Activated B cell treated with CpG ODN at 0.5 μM for 24 hours (primary cell): ENCODE measurements at regions of chr12 and their contacts with region 1.

Region 1: DNA sequence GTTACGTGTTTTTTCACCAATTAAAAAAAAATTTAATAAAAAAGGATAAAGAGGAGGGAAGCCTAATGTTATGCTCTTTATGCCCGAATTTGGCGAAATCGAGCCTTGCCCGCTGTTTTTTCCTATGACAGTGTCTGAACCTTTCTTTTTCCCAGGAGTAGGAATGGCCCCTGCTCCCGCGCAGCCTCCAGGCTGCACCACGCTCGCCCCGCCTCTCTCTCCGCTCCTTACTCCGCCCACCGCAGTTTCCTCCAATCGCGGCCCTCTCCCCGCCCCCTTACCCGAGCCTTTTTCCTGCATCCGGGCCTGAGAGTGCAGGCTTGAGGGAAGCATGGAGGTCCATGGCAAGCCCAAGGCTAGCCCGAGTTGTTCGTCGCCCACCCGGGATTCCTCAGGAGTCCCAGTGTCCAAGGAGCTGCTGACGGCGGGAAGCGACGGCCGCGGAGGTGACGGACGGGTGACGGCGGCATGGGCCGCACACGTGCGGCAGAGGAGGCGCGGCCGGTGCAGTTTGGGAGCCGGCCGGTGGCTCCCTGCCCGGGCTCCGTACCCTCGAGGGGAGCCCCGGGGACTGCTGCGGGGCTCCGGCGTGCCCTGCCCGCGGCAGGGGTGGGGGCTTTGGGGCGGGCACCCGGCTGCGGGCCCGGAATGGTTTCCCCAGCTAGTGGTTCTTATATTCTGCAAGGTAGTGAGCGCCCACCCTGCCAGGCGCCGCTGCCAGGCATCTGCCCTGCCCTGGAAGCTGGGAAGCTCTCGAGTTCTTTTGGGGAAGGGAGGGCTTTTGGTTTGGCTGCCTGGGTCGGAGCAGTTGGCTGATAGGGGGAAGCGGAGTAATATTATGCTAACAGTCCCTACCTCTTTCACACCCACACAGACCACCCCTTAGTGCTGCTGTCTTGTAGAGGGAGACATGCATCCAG is at the start of gene NOPCHAP1:
- DNase-seq: peak; percentile 83
- ATAC-seq: peak; percentile 98
- H3K4me3 Mint-ChIP-seq: peak within 1 kb of the TSS; percentile 91
- H3K27ac Mint-ChIP-seq: peak within 1 kb of the TSS; percentile 70
- H3K4me1 Mint-ChIP-seq: peaks cover 24% of the 10 kb centered on the region
- H3K27me3 Mint-ChIP-seq: no peaks in the 10 kb centered on the region
- CTCF ChIP-seq: no peak
- total RNA-seq, gene NOPCHAP1: 26.4 and 30.0 TPM in 2 replicates

Region 2: GRCh38 chr12:104974616-104975290 is 11.5 kb before region 1 on chr12:
- CTCF ChIA-PET with region 1: no interaction called
- POLR2A ChIA-PET with region 1: interaction called, 4 read pairs
- intact Hi-C with region 1: loop called (anchors 1 kb)
- DNase-seq: peak; percentile 35
- ATAC-seq: peak; percentile 98
- H3K4me3 Mint-ChIP-seq: peak overlapping the region; percentile 17
- H3K27ac Mint-ChIP-seq: peak overlapping the region; percentile 72
- H3K4me1 Mint-ChIP-seq: peaks cover 40% of the 10 kb centered on the region
- H3K27me3 Mint-ChIP-seq: no peaks in the 10 kb centered on the region
- CTCF ChIP-seq: no peak

Region 3: GRCh38 chr12:105030820-105031807 is 44.8 kb after region 1 on chr12:
- CTCF ChIA-PET with region 1: no interaction called
- POLR2A ChIA-PET with region 1: interaction called, 4 read pairs
- intact Hi-C with region 1: loop called (anchors 2 kb)
- DNase-seq: no peak
- ATAC-seq: peak; percentile 52
- H3K4me3 Mint-ChIP-seq: peak overlapping the region; percentile 49
- H3K27ac Mint-ChIP-seq: peak overlapping the region; percentile 54
- H3K4me1 Mint-ChIP-seq: peaks cover 12% of the 10 kb centered on the region
- H3K27me3 Mint-ChIP-seq: no peaks in the 10 kb centered on the region
- CTCF ChIP-seq: no peak